A549 (cell line): ENCODE measurements at regions of chr9 and their contacts with region 1.

Region 1: GRCh38 chr9:893843-894420 is 52.4 kb downstream of the DMRT1 start:
- DNase-seq: peak; percentile 58 to 74
- ATAC-seq: peak; percentile 94 to 96
- H3K4me3 ChIP-seq: no peak overlapping the region
- H3K27ac ChIP-seq: no peak overlapping the region
- H3K4me1 ChIP-seq: no peaks in the 10 kb centered on the region
- CTCF ChIP-seq: peak; percentile 86
- EP300 ChIP-seq: no peak
- POLR2A ChIP-seq: no peak
- RAD21 ChIP-seq: peak; percentile 76 to 81

Region 2: DNA sequence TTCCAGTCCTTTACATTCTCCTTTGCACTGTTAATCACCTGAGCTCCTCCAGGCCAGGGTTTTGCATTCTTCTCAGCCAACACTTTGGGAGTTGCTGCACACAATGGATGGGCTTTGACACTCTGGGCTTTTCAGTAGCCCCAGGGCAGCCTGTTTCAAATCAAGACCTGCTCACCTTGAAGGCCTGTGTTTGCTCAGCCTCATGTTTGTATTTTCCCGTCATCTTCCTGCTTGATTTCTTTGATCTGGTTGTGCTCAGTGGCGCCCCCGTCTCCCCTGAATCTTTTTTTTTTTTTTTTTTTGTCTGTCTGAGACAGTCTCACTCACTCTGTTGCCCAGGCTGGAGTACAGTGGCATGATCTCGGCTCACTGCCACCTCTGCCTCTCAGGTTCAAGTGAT is 11.5 kb before region 1 on chr9:
- CTCF ChIA-PET with region 1: interaction called, 14 read pairs
- POLR2A ChIA-PET with region 1: no interaction called
- DNase-seq: peak in 1 of 2 experiments; percentile 7
- ATAC-seq: no peak
- H3K4me3 ChIP-seq: no peak overlapping the region
- H3K27ac ChIP-seq: no peak overlapping the region
- H3K4me1 ChIP-seq: no peaks in the 10 kb centered on the region
- CTCF ChIP-seq: no peak
- EP300 ChIP-seq: no peak
- POLR2A ChIP-seq: no peak
- RAD21 ChIP-seq: no peak

Region 3: DNA sequence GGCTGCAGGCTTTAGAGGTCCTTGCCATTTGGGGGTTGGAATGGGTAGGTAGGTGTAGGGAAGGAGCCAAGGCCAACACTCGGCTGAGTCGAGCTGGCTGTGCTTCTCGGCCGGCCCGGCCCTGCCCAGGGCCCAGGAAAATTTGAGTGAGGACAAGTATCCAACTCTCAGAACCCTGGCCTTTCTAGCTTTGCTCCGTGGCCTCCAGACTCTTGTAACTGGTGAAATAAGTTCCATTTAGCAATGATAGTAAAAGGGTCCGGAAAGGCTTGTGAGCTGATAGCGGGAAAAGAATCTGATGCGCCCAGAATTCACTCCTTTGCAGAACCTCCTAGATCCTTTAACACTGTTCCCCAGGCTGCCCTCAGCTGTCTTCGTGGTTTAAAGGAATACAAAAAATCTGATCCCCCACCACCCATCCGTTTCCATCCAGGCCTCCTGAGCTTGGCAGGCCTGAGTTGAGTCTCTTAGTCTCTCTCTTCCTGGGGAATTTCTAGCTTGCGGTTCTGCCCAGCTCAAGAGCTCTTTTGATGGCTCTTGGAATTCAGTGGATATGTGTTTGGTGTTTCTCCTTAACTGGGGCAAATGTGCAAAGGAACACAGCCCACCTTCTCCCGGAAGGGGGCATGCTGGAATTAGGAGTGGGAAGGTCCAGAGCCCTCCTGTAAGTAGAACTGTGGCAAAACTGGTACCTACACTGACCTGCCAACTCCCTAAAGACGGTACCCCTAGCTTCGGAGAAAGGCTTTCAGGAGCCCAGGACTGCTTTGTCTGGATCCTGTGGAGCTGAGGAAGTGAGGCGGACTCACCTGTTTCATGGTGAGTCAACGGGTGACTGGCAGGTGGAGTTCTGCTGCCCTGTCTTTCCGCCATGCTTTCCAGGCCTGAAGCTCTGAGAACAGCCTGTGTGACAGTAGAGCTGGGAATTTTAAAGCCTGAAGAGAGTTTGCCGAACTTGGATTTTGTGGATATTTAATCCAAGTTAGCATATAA is 84.2 kb after region 1 on chr9:
- CTCF ChIA-PET with region 1: interaction called, 10 read pairs
- POLR2A ChIA-PET with region 1: no interaction called
- DNase-seq: no peak
- ATAC-seq: no peak
- H3K4me3 ChIP-seq: no peak overlapping the region
- H3K27ac ChIP-seq: no peak overlapping the region
- H3K4me1 ChIP-seq: peaks cover 4% of the 10 kb centered on the region; the same call in 1 of the 3 replicates
- CTCF ChIP-seq: no peak
- EP300 ChIP-seq: no peak
- POLR2A ChIP-seq: no peak
- RAD21 ChIP-seq: no peak

Region 4: GRCh38 chr9:995723-996122 is 101.8 kb after region 1 on chr9:
- CTCF ChIA-PET with region 1: interaction called, 54 read pairs
- POLR2A ChIA-PET with region 1: no interaction called
- DNase-seq: peak in 1 of 2 experiments; percentile 18
- ATAC-seq: peak; percentile 34 to 52; a peak in 4 of 6 replicates
- H3K4me3 ChIP-seq: no peak overlapping the region
- H3K27ac ChIP-seq: no peak overlapping the region
- H3K4me1 ChIP-seq: peaks cover 4% of the 10 kb centered on the region; the same call in 1 of the 3 replicates
- CTCF ChIP-seq: no peak
- EP300 ChIP-seq: no peak
- POLR2A ChIP-seq: no peak
- RAD21 ChIP-seq: no peak

Region 5: GRCh38 chr9:1009101-1009707 is 115.3 kb after region 1 on chr9:
- CTCF ChIA-PET with region 1: interaction called, 64 read pairs
- POLR2A ChIA-PET with region 1: no interaction called
- DNase-seq: peak; percentile 59 to 76
- ATAC-seq: peak; percentile 93 to 99
- H3K4me3 ChIP-seq: no peak overlapping the region
- H3K27ac ChIP-seq: 0 out of 6 replicates have a peak overlapping the region, but pooled peaks of 1 of the 2 experiments have one; percentile 30
- H3K4me1 ChIP-seq: 0 out of 3 replicates have a peak, but pooled peaks cover 3% of the 10 kb centered on the region
- CTCF ChIP-seq: peak; percentile 81
- EP300 ChIP-seq: no peak
- POLR2A ChIP-seq: no peak
- RAD21 ChIP-seq: peak; percentile 89 to 93